PC-9 (cell line): ENCODE measurements at regions of chr7 and their contacts with region 1.

Region 1: GRCh38 chr7:152543799-152544198 is 108.0 kb upstream of the KMT2C start:
- DNase-seq: no peak
- H3K4me3 ChIP-seq: no peak overlapping the region
- H3K27ac ChIP-seq: no peak overlapping the region
- H3K4me1 ChIP-seq: peaks cover 12% of the 10 kb centered on the region
- H3K27me3 ChIP-seq: no peaks in the 10 kb centered on the region
- CTCF ChIP-seq: no peak

Region 2: DNA sequence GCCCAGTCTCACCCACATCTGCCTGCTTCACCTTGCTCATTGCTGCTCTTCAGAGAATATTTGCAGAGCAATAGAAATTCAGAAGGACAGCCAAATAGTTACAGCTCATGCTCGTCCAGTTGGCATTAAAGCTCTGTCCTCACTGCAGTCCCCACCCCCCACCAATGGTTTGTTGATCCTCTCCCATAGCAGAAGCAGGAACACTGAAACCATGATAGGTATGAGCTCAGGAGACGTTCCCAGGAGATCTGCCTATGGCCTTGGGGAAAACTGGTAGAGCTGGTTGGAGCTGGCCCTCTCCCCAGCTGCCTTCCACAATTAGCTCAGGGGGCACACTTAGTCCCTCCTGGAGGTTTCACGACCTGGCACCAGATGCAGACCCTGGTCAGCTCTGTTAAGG is 39.4 kb before region 1 on chr7:
- CTCF ChIA-PET with region 1: no interaction called
- POLR2A ChIA-PET with region 1: interaction called, 4 read pairs
- intact Hi-C with region 1: loop called (anchors 1 kb)
- DNase-seq: peak; percentile 74 to 82
- H3K4me3 ChIP-seq: no peak overlapping the region
- H3K27ac ChIP-seq: peak overlapping the region; percentile 79
- H3K4me1 ChIP-seq: peaks cover 27% of the 10 kb centered on the region
- H3K27me3 ChIP-seq: no peaks in the 10 kb centered on the region
- CTCF ChIP-seq: no peak

Region 3: GRCh38 chr7:152527610-152528032 is 16.2 kb before region 1 on chr7:
- CTCF ChIA-PET with region 1: no interaction called
- POLR2A ChIA-PET with region 1: no interaction called
- intact Hi-C with region 1: no loop called
- DNase-seq: peak in 1 of 2 experiments; percentile 34
- H3K4me3 ChIP-seq: no peak overlapping the region
- H3K27ac ChIP-seq: no peak overlapping the region
- H3K4me1 ChIP-seq: no peaks in the 10 kb centered on the region; the same call in 1 of the 2 replicates
- H3K27me3 ChIP-seq: no peaks in the 10 kb centered on the region
- CTCF ChIP-seq: no peak